Activated CD4-positive, alpha-beta memory T cell treated with anti-CD3 and anti-CD28 coated beads for 36 hours (primary cell): ENCODE measurements at regions of chr9 and their contacts with region 1.

Region 1: DNA sequence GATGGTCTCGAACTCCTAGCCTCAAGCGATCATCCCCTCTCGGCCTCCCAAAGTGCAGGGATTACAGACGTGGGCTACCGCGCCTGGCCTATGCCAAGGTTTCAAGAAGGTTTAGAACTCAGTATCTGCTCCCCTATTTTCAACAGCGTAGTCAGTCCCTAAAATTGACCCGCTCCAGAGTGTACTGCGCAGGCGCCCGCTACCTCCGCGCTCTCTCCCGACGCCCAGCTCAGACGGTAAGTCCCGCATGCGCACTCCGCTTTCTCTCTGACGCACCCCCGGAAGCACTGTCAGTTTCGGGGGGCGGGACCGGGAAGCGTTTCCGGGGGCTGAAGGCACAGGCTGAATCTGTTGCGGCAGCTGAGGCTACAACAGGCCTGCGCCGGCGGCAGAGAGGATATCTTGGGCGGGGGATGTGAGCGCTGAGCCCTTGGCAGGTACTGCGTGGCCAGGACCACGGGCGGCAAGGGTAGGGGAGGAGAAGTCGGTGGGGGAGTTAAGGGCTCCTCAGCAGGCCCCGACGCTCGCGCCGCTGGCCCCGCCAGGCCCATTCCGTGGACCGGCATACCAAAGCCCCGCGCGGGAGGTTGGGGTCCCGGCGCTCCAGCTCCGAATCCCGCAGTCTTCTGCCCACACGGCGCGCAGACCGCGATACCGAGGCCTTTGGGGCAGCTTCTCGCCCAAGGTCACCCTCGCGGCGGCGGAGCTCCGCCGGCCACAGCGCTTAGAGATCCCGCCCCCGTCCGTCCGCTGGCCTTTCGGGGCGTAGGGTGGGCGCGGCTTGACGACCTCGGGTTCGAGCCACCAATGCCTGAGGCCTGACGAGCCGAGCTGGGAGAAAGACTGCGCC is at the start of gene ZBTB43:
- DNase-seq: peak; percentile 99
- H3K4me3 Mint-ChIP-seq: peak within 1 kb of the TSS; percentile 89
- H3K27ac Mint-ChIP-seq: peak within 1 kb of the TSS; percentile 96
- H3K4me1 Mint-ChIP-seq: peaks cover 28% of the 10 kb centered on the region
- H3K27me3 Mint-ChIP-seq: no peaks in the 10 kb centered on the region
- total RNA-seq, gene ZBTB43: 20.5 to 28.4 TPM

Region 2: GRCh38 chr9:126722252-126723078 is 82.5 kb before region 1 on chr9:
- CTCF ChIA-PET with region 1: no interaction called
- POLR2A ChIA-PET with region 1: interaction called, 9 read pairs
- intact Hi-C with region 1: loop called (anchors 1 kb)
- DNase-seq: peak; percentile 94
- H3K4me3 Mint-ChIP-seq: peak overlapping the region; percentile 80
- H3K27ac Mint-ChIP-seq: peak overlapping the region; percentile 89
- H3K4me1 Mint-ChIP-seq: peaks cover 37% of the 10 kb centered on the region
- H3K27me3 Mint-ChIP-seq: no peaks in the 10 kb centered on the region

Region 3: GRCh38 chr9:126819482-126819881 is 14.6 kb after region 1 on chr9:
- CTCF ChIA-PET with region 1: no interaction called
- POLR2A ChIA-PET with region 1: interaction called, 5 read pairs
- intact Hi-C with region 1: loop called (anchors 1 kb)
- DNase-seq: no peak
- H3K4me3 Mint-ChIP-seq: no peak overlapping the region
- H3K27ac Mint-ChIP-seq: peak overlapping the region; percentile 31
- H3K4me1 Mint-ChIP-seq: peaks cover 33% of the 10 kb centered on the region
- H3K27me3 Mint-ChIP-seq: no peaks in the 10 kb centered on the region

Region 4: GRCh38 chr9:126860077-126860756 is 55.3 kb after region 1 on chr9 and contains the start of gene ZBTB34:
- CTCF ChIA-PET with region 1: interaction called, 7 read pairs
- POLR2A ChIA-PET with region 1: interaction called, 3 read pairs
- intact Hi-C with region 1: loop called (anchors 2 kb)
- DNase-seq: peak; percentile 80
- H3K4me3 Mint-ChIP-seq: peak within 1 kb of the TSS; percentile 80
- H3K27ac Mint-ChIP-seq: peak within 1 kb of the TSS; percentile 79
- H3K4me1 Mint-ChIP-seq: peaks cover 16% of the 10 kb centered on the region
- H3K27me3 Mint-ChIP-seq: peaks cover 3% of the 10 kb centered on the region
- total RNA-seq, gene ZBTB34: 4.0 to 4.5 TPM